ENCODE measurements at regions of chr2 and their contacts with region 1.

Region 1: GRCh38 chr2:165675551-165675968 is 118.5 kb downstream of the GALNT3 start:
- DNase-seq: no peak
- ATAC-seq: peak; percentile 84
- H3K4me3 ChIP-seq: no peak overlapping the region
- H3K27ac ChIP-seq: no peak overlapping the region
- H3K4me1 ChIP-seq: no peaks in the 10 kb centered on the region
- H3K27me3 ChIP-seq: no peaks in the 10 kb centered on the region
- CTCF ChIP-seq: no peak
- EP300 ChIP-seq: no peak
- POLR2A ChIP-seq: no peak
- RAD21 ChIP-seq: no peak

Region 2: DNA sequence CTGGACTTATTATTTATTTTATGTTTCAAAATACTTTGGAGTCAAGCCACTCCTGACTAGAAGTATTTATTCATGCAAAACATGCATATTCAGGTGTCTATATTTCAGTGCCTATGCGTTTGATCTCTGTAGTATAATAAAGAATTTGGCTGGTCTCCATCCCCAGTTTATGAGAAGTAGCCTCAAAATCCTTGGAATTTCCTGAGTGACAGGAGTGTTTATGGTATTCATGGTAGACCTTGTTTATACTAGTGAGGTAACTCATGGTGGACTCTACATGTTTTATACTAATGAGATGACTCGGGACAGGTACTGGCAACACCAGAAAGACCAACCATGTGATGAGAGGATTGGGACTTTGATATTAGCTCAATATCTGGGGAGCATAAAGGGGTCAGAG is 250.0 kb before region 1 on chr2:
- CTCF ChIA-PET with region 1: no interaction called
- POLR2A ChIA-PET with region 1: no interaction called
- RAD21 ChIA-PET with region 1: no interaction called
- SMC1A ChIA-PET with region 1: no interaction called
- in situ Hi-C with region 1: no loop called
- intact Hi-C with region 1: no loop called
- DNase-seq: no peak
- ATAC-seq: no peak
- H3K4me3 ChIP-seq: no peak overlapping the region
- H3K27ac ChIP-seq: no peak overlapping the region
- H3K4me1 ChIP-seq: no peaks in the 10 kb centered on the region
- H3K27me3 ChIP-seq: no peaks in the 10 kb centered on the region
- CTCF ChIP-seq: no peak
- EP300 ChIP-seq: no peak
- POLR2A ChIP-seq: no peak
- RAD21 ChIP-seq: no peak

Region 3: GRCh38 chr2:165499131-165499530 is 176.4 kb before region 1 on chr2:
- CTCF ChIA-PET with region 1: no interaction called
- POLR2A ChIA-PET with region 1: no interaction called
- RAD21 ChIA-PET with region 1: interaction called, 4 read pairs
- SMC1A ChIA-PET with region 1: interaction called, 10 read pairs
- in situ Hi-C with region 1: no loop called
- intact Hi-C with region 1: no loop called
- DNase-seq: no peak
- ATAC-seq: no peak
- H3K4me3 ChIP-seq: no peak overlapping the region
- H3K27ac ChIP-seq: no peak overlapping the region
- H3K4me1 ChIP-seq: no peaks in the 10 kb centered on the region
- H3K27me3 ChIP-seq: no peaks in the 10 kb centered on the region
- CTCF ChIP-seq: no peak
- EP300 ChIP-seq: no peak
- POLR2A ChIP-seq: no peak
- RAD21 ChIP-seq: no peak

Region 4: DNA sequence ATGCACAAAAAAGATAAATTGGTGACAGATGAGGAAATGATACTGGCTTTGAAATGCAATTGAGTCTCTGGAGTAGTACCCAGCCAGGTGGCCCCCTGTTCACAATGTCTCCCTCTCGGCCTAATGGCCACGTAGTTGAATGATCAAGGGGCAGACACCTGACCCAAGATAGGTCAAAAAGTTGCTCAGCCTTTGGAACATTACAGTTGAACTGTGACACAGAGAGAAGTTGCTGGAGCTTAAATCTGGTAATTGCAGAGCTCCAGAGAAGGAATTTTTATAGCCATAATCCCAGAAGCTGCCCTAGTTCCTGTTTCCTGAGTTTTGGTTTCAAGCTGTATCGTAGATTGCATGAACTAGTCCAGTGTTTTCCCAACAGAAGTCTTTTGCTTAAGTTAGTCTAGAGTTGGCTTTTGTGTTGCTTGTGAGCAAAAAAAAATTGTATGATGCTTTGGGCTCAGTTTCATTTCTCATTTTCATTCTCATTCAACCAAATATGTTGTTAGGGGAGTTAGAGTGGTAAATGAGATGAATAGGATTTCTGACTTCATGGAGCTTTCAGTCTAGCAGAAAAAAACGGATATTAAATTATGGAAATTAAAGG is 88.1 kb before region 1 on chr2:
- CTCF ChIA-PET with region 1: no interaction called
- POLR2A ChIA-PET with region 1: no interaction called
- RAD21 ChIA-PET with region 1: interaction called, 5 read pairs
- SMC1A ChIA-PET with region 1: interaction called, 13 read pairs
- in situ Hi-C with region 1: no loop called
- intact Hi-C with region 1: no loop called
- DNase-seq: peak; percentile 32
- ATAC-seq: peak; percentile 90
- H3K4me3 ChIP-seq: 0 out of 2 replicates have a peak overlapping the region, but pooled peaks have one; percentile 19
- H3K27ac ChIP-seq: no peak overlapping the region; the same call in 1 of the 2 replicates
- H3K4me1 ChIP-seq: peaks cover 5% of the 10 kb centered on the region; the same call in 1 of the 2 replicates
- H3K27me3 ChIP-seq: no peaks in the 10 kb centered on the region
- CTCF ChIP-seq: no peak
- EP300 ChIP-seq: no peak
- POLR2A ChIP-seq: no peak
- RAD21 ChIP-seq: no peak

Region 5: DNA sequence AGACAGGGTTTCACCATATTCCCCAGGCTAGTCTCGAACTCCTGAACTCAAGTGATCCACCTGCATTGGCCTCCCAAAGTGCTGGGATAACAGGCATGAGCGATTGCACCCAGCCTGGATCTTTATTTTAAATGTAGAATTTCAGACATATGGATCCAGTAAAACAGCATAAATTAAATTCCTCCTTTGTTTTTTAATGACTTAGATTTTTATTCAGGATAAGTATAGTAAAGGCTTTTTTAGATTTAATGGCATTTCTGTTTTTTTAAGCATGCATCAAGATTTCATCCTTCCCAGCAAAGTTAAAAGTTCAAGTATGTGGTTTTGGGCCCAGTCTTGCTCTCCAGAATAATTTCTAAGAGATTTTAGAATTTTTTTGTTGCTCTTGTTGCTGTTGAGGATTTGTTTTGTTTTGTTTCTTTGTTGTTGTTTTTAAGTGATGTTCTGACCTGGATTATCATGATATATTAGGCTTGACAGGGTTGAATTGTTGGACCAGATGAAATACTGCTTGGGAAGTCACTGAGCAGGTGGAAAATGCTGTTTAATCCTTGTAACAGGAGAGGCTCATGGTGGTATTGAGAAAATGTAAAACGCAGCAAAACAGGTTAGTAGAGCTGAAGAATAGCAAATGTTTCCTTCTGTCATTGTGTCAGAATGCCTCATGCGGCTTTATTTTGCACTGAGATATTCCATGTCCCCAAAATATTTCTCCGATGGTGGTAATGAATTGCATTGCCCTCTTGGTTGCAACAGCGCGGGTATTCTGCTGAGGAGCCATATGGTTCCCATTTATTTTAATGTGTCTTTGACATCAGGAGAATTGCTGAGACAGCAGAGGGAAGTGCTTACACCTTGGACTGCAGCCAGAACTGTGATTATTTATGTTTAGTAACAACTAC is 29.4 kb before region 1 on chr2:
- CTCF ChIA-PET with region 1: no interaction called
- POLR2A ChIA-PET with region 1: no interaction called
- RAD21 ChIA-PET with region 1: interaction called, 4 read pairs
- SMC1A ChIA-PET with region 1: interaction called, 35 read pairs
- in situ Hi-C with region 1: no loop called
- intact Hi-C with region 1: no loop called
- DNase-seq: no peak
- ATAC-seq: no peak
- H3K4me3 ChIP-seq: no peak overlapping the region
- H3K27ac ChIP-seq: no peak overlapping the region
- H3K4me1 ChIP-seq: no peaks in the 10 kb centered on the region
- H3K27me3 ChIP-seq: no peaks in the 10 kb centered on the region
- CTCF ChIP-seq: no peak
- EP300 ChIP-seq: no peak
- POLR2A ChIP-seq: no peak
- RAD21 ChIP-seq: no peak

Region 6: GRCh38 chr2:165691615-165692014 is 16.1 kb after region 1 on chr2:
- CTCF ChIA-PET with region 1: interaction called, 4 read pairs
- POLR2A ChIA-PET with region 1: no interaction called
- RAD21 ChIA-PET with region 1: interaction called, 5 read pairs
- SMC1A ChIA-PET with region 1: interaction called, 31 read pairs
- in situ Hi-C with region 1: no loop called
- intact Hi-C with region 1: no loop called
- DNase-seq: no peak
- ATAC-seq: no peak
- H3K4me3 ChIP-seq: no peak overlapping the region
- H3K27ac ChIP-seq: no peak overlapping the region
- H3K4me1 ChIP-seq: no peaks in the 10 kb centered on the region
- H3K27me3 ChIP-seq: no peaks in the 10 kb centered on the region
- CTCF ChIP-seq: no peak
- EP300 ChIP-seq: no peak
- POLR2A ChIP-seq: no peak
- RAD21 ChIP-seq: no peak

Region 7: GRCh38 chr2:165720511-165720910 is 45.0 kb after region 1 on chr2:
- CTCF ChIA-PET with region 1: no interaction called
- POLR2A ChIA-PET with region 1: no interaction called
- RAD21 ChIA-PET with region 1: no interaction called
- SMC1A ChIA-PET with region 1: no interaction called
- in situ Hi-C with region 1: no loop called
- intact Hi-C with region 1: no loop called
- DNase-seq: no peak
- ATAC-seq: no peak
- H3K4me3 ChIP-seq: no peak overlapping the region
- H3K27ac ChIP-seq: no peak overlapping the region
- H3K4me1 ChIP-seq: no peaks in the 10 kb centered on the region
- H3K27me3 ChIP-seq: no peaks in the 10 kb centered on the region
- CTCF ChIP-seq: no peak
- EP300 ChIP-seq: no peak
- POLR2A ChIP-seq: no peak
- RAD21 ChIP-seq: no peak

Region 8: DNA sequence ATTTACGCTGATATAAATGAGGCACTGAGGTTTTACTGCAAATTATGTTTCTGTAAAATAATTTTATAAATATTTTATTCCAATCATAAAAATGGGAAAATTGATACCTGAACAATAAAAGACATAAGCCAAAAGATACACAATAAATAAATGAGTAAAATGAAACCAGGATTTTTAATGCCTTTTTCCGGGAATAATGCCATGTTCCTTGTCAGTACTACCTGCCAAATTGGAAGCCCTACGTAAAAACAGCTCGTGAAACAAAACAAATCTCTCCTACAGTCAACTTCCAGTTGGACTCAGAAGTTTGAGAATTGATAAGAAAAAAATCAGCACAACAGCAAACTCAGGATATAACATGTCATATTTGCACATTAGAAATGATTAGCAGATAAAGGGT is 100.5 kb after region 1 on chr2:
- CTCF ChIA-PET with region 1: no interaction called
- POLR2A ChIA-PET with region 1: no interaction called
- RAD21 ChIA-PET with region 1: no interaction called
- SMC1A ChIA-PET with region 1: no interaction called
- in situ Hi-C with region 1: no loop called
- intact Hi-C with region 1: no loop called
- DNase-seq: no peak
- ATAC-seq: no peak
- H3K4me3 ChIP-seq: no peak overlapping the region
- H3K27ac ChIP-seq: no peak overlapping the region
- H3K4me1 ChIP-seq: no peaks in the 10 kb centered on the region
- H3K27me3 ChIP-seq: no peaks in the 10 kb centered on the region
- CTCF ChIP-seq: no peak
- EP300 ChIP-seq: no peak
- POLR2A ChIP-seq: no peak
- RAD21 ChIP-seq: no peak